Mammary epithelial cell (primary cell): ENCODE measurements at regions of chr2 and their contacts with region 1.

Region 1: GRCh38 chr2:152175458-152176325 is at the start of gene STAM2:
- DNase-seq: peak; percentile 90
- H3K4me3 ChIP-seq: peak within 1 kb of the TSS; percentile 75 to 81 (median 80)
- H3K27ac ChIP-seq: peak within 1 kb of the TSS; percentile 83
- H3K4me1 ChIP-seq: peaks cover 26% of the 10 kb centered on the region
- H3K27me3 ChIP-seq: no peaks in the 10 kb centered on the region
- CTCF ChIP-seq: peak; percentile 90 to 98
- total RNA-seq, gene STAM2: 23.8 to 27.3 TPM

Region 2: DNA sequence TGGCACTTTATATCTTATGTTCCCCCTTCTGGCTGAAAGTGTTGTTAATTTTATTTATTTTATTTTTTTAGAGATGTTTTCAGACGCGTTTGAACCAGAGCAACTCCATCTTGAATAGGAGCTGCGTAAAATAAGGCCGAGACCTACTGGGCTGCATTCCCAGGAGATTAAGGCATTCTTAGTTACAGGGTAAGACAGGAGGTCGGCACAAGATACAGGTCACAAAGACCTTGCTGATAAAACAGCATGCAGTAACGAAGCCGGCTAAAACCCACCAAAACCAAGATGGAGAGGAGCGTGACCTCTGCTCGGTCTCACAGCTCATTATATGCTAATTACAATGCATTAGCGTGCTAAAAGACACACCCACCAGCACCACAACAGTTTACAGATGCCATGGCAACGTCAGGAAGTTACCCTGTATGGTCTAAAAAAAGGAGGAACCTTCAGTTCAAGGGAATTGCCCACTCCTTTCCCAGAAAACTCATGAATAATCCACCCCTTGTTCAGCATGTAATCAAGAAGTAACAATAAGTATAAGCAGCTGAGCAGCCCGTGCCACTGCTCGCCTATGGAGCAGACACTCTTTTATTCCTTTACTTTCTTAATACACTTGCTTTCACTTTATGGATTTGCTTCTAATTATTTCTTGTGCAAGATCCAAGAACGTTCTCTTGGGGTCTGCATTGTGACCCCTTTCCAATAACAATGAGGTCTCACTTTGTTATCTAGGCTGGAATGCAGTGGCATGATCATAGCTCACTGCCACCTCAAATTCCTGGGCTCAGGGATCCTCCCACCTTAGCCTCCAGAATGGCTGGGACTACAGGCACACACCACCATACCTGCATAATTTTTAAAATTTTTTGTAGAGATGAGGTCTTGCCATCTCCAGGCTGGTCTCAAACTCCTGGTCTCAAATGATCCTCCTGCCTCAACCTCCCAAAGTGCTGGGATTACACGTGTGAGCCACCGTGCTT is 132.8 kb before region 1 on chr2:
- CTCF ChIA-PET with region 1: no interaction called
- dilution Hi-C with region 1: no loop called
- in situ Hi-C with region 1: loop called in 1 of 2 experiments (anchors 5 kb)
- intact Hi-C with region 1: no loop called
- DNase-seq: no peak
- H3K4me3 ChIP-seq: no peak overlapping the region
- H3K27ac ChIP-seq: no peak overlapping the region
- H3K4me1 ChIP-seq: no peaks in the 10 kb centered on the region
- H3K27me3 ChIP-seq: peaks cover 6% of the 10 kb centered on the region
- CTCF ChIP-seq: no peak

Region 3: DNA sequence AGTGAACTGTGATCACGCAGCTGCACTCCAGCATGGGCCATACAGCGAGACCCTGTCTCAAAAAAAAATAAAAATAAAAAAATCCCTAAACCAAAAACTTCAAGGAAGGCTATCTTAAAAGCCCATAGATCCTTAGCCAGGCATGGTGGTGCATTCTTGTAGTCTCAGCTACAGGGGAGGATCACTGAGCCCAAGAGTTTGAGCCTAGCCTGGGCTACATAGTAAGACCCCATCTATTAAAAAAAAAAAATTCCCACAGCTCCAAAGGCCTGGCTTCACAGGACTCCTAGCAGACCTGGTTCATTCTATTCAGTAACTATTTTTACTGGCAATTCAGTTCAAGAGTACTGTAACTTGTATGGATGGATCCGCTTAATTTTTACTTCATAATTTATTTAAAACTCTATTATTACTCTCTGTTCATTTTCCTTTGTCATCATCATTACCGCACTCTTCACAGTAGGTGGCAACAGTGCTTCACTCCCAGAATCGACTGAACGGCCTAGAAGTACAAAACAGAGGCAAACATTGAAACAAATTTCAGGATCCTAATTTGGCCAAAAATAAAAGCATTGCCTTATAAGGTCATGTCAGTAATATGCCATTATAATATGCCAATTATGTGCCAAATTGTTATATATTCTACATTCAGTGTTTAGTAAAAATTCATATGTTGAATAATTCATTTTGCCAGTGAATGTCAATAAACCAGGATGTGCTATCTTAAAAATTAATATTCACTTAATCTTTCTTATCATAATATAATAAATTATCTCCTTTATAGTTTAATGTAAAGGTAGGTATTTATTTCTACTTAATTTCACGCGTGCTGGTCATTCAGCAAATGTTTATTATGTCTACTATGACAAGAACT is 14.2 kb after region 1 on chr2:
- CTCF ChIA-PET with region 1: no interaction called
- dilution Hi-C with region 1: no loop called
- in situ Hi-C with region 1: no loop called
- intact Hi-C with region 1: no loop called
- DNase-seq: peak; percentile 57
- H3K4me3 ChIP-seq: no peak overlapping the region
- H3K27ac ChIP-seq: no peak overlapping the region
- H3K4me1 ChIP-seq: no peaks in the 10 kb centered on the region
- H3K27me3 ChIP-seq: no peaks in the 10 kb centered on the region
- CTCF ChIP-seq: peak; percentile 86 to 88

Region 4: DNA sequence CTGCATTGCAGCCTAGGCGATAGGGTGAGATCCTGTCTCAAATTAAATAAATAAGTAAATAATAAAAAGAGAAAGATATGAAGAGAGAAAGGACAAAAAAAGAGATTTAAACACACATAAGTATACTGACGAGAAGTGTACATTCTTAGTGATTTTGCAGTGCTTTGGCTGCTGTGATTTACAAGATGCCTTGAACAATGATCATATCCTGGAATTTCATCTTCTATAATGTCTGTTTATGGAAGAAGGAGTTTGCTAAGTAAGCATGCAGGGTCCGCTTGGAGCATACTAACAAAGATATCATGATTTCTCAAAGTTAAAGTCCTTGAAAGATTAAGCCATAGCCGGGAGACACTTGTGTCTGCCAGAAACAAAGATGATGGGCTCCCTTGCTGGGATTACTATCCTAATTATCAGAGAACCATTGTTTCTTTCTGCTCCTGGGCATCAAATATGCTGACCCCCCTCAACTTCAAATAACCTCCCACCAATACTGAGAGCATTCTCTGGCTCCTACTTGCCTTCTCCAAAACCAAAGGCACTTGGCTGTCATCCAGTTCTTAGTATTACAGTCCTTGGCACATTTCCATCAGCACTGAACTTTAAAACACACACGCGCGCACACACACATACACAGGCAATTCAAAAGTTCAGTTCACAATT is 47.4 kb after region 1 on chr2:
- CTCF ChIA-PET with region 1: no interaction called
- dilution Hi-C with region 1: no loop called
- in situ Hi-C with region 1: no loop called
- intact Hi-C with region 1: no loop called
- DNase-seq: peak; percentile 68
- H3K4me3 ChIP-seq: no peak overlapping the region
- H3K27ac ChIP-seq: no peak overlapping the region
- H3K4me1 ChIP-seq: peaks cover 9% of the 10 kb centered on the region
- H3K27me3 ChIP-seq: no peaks in the 10 kb centered on the region
- CTCF ChIP-seq: no peak

Region 5: DNA sequence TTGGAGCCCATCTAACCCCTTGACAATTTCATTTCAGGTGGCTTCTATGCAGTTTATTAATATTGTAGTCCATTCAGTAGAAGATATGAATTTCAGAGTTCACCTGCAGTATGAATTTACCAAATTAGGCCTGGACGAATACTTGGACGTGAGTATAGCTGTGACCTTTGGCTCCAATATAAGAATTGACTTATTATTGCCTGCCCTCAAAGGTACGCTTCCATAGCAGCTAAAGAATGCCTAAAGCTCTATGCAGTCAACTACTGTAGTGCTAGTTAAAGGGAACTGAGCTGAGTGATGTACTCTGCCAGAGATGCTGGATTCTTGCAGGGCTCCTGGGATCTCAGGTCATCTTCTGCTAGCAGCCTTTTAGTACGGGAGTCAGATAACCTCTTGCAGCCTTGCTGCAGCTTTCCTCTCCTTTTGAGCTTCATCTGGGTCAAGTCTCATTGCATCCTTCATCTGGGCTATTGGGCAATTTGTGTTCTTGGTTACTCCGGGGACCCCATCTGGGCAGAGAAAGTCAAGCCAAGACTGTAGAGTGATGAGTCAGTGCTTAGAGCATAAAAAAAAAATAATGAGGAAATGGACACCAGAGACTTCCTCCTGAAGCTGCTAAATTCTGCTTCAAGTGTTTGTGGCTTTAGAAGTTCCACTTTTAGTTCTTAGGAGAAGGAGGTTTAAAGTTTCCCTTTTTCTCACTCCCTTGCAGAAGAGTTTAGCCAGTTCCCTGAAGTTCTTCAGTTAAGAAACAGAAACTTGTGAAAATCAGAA is 436.0 kb after region 1 on chr2:
- CTCF ChIA-PET with region 1: no interaction called
- dilution Hi-C with region 1: loop called (anchors 25 kb)
- in situ Hi-C with region 1: no loop called
- intact Hi-C with region 1: no loop called
- DNase-seq: peak; percentile 28
- H3K4me3 ChIP-seq: no peak overlapping the region
- H3K27ac ChIP-seq: no peak overlapping the region
- H3K4me1 ChIP-seq: no peaks in the 10 kb centered on the region
- H3K27me3 ChIP-seq: no peaks in the 10 kb centered on the region
- CTCF ChIP-seq: no peak

Region 6: GRCh38 chr2:152717228-152718075 is 541.8 kb after region 1 on chr2 and contains the start of gene PRPF40A:
- CTCF ChIA-PET with region 1: no interaction called
- dilution Hi-C with region 1: no loop called
- in situ Hi-C with region 1: no loop called
- intact Hi-C with region 1: loop called (anchors 1 kb)
- DNase-seq: peak; percentile 97
- H3K4me3 ChIP-seq: peak within 1 kb of the TSS; percentile 89 to 97 (median 91)
- H3K27ac ChIP-seq: peak within 1 kb of the TSS; percentile 91
- H3K4me1 ChIP-seq: peaks cover 14% of the 10 kb centered on the region
- H3K27me3 ChIP-seq: no peaks in the 10 kb centered on the region
- CTCF ChIP-seq: no peak
- total RNA-seq, gene PRPF40A: 126 to 133 TPM